ENCODE measurements at regions of chr6 and their contacts with region 1.

Region 1: GRCh38 chr6:37381579-37381978 is 27.8 kb downstream of the RNF8 start:
- DNase-seq: peak; percentile 67
- ATAC-seq: peak; percentile 28
- H3K4me3 ChIP-seq: no peak overlapping the region
- H3K4me3 Mint-ChIP-seq: no peak overlapping the region
- H3K27ac ChIP-seq: no peak overlapping the region
- H3K27ac Mint-ChIP-seq: no peak overlapping the region
- H3K4me1 ChIP-seq: peaks cover 8 to 26% of the 10 kb centered on the region in 2 donors
- H3K4me1 Mint-ChIP-seq: peaks cover 23% of the 10 kb centered on the region
- H3K27me3 ChIP-seq: no peaks in the 10 kb centered on the region
- H3K27me3 Mint-ChIP-seq: no peaks in the 10 kb centered on the region
- CTCF ChIP-seq: peak; percentile 75

Region 2: GRCh38 chr6:37369321-37370201 is 12.0 kb before region 1 on chr6:
- CTCF ChIA-PET with region 1: interaction called, 21 read pairs
- POLR2A ChIA-PET with region 1: no interaction called
- intact Hi-C with region 1: no loop called
- DNase-seq: no peak
- ATAC-seq: no peak
- H3K4me3 ChIP-seq: no peak overlapping the region
- H3K4me3 Mint-ChIP-seq: no peak overlapping the region
- H3K27ac ChIP-seq: no peak overlapping the region
- H3K27ac Mint-ChIP-seq: no peak overlapping the region
- H3K4me1 ChIP-seq: peaks cover 2 to 20% of the 10 kb centered on the region in 2 donors
- H3K4me1 Mint-ChIP-seq: peaks cover 18% of the 10 kb centered on the region
- H3K27me3 ChIP-seq: no peaks in the 10 kb centered on the region
- H3K27me3 Mint-ChIP-seq: no peaks in the 10 kb centered on the region
- CTCF ChIP-seq: no peak

Region 3: GRCh38 chr6:37507690-37508421 is 126.3 kb after region 1 on chr6:
- CTCF ChIA-PET with region 1: no interaction called
- POLR2A ChIA-PET with region 1: no interaction called
- intact Hi-C with region 1: no loop called
- DNase-seq: no peak
- ATAC-seq: no peak
- H3K4me3 ChIP-seq: no peak overlapping the region
- H3K4me3 Mint-ChIP-seq: no peak overlapping the region
- H3K27ac ChIP-seq: no peak overlapping the region
- H3K27ac Mint-ChIP-seq: no peak overlapping the region
- H3K4me1 ChIP-seq: peaks cover 19 to 24% of the 10 kb centered on the region in 2 donors
- H3K4me1 Mint-ChIP-seq: peaks cover 21% of the 10 kb centered on the region
- H3K27me3 ChIP-seq: peaks cover 0 to 4% (median 0%) of the 10 kb centered on the region in 4 experiments
- H3K27me3 Mint-ChIP-seq: no peaks in the 10 kb centered on the region
- CTCF ChIP-seq: no peak